Naive thymus-derived CD4-positive, alpha-beta T cell (primary cell): ENCODE measurements at regions of chr6 and their contacts with region 1.

Region 1: GRCh38 chr6:138410972-138411667 is 7.1 kb downstream of the HEBP2 start:
- DNase-seq: no peak
- ATAC-seq: no peak
- H3K4me3 ChIP-seq: no peak overlapping the region
- H3K4me3 Mint-ChIP-seq: peak overlapping the region in 1 of 10 donors; percentile 28
- H3K27ac ChIP-seq: no peak overlapping the region
- H3K27ac Mint-ChIP-seq: peak overlapping the region in 7 of 9 donors; percentile 13 to 75 (median 51)
- H3K4me1 ChIP-seq: no peaks in the 10 kb centered on the region
- H3K4me1 Mint-ChIP-seq: peaks cover 10 to 35% (median 28%) of the 10 kb centered on the region in 7 donors
- H3K27me3 ChIP-seq: no peaks in the 10 kb centered on the region
- H3K27me3 Mint-ChIP-seq: no peaks in the 10 kb centered on the region

Region 2: GRCh38 chr6:138455746-138456400 is 44.8 kb after region 1 on chr6:
- CTCF ChIA-PET with region 1: interaction called, 3 read pairs
- POLR2A ChIA-PET with region 1: interaction called, 18 read pairs
- intact Hi-C with region 1: loop called in 1 of 2 experiments (anchors 2 kb)
- DNase-seq: peak in 7 of 9 donors; percentile 51 to 81 (median 75)
- ATAC-seq: peak; percentile 86
- H3K4me3 ChIP-seq: peak overlapping the region; percentile 48
- H3K4me3 Mint-ChIP-seq: peak overlapping the region; percentile 40 to 79 (median 70)
- H3K27ac ChIP-seq: peak overlapping the region; percentile 75
- H3K27ac Mint-ChIP-seq: peak overlapping the region; percentile 77 to 97 (median 93)
- H3K4me1 ChIP-seq: peaks cover 19 to 22% of the 10 kb centered on the region in 2 donors
- H3K4me1 Mint-ChIP-seq: peaks cover 5 to 32% (median 22%) of the 10 kb centered on the region in 7 donors
- H3K27me3 ChIP-seq: no peaks in the 10 kb centered on the region
- H3K27me3 Mint-ChIP-seq: peaks cover 0 to 3% (median 0%) of the 10 kb centered on the region in 5 donors